ENCODE measurements at regions of chr16 and their contacts with region 1.

Region 1: GRCh38 chr16:18959031-18959505 is 24.7 kb upstream of the TMC7 start:
- DNase-seq: peak; percentile 17 to 37
- ATAC-seq: peak; percentile 50 to 56
- H3K4me3 ChIP-seq: no peak overlapping the region
- H3K27ac ChIP-seq: peak overlapping the region; percentile 87 to 97 (median 96)
- H3K4me1 ChIP-seq: peaks cover 27 to 34% of the 10 kb centered on the region in 2 donors
- H3K27me3 ChIP-seq: no peaks in the 10 kb centered on the region
- CTCF ChIP-seq: no peak
- POLR2A ChIP-seq: no peak

Region 2: DNA sequence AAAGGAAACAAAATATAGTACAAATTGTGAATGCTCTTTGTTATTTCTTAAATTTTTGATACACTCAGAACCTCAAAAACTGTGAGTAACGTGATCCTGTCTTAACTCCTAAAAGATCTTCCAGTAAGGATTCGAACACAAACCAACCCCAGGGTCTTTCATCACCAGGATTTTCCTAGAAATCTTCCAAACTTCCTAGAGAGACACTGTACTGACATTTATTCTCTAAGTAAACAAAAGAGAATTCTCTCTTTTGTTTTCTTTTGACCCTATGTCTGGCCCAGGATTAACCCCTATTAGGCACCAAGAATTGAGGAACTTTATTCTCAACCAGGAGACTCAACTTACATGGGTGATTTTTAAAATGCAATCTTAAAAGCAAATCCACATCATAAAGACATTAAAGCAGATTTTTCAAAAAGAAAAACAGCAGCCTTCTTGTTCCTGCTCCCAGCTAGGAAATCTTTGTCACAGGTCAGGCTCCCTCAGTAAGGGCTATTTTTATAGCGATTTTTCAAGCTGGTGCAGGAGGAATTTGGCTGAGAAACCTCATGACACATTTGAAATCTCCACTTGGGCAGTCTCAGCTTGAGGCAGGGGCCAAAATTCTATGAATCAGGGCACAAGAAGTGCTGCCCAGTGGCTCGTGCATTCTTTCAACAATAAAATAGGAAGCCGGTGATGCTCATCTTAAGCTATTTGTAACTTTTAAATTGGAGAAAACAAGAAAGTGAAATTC is 26.7 kb before region 1 on chr16:
- in situ Hi-C with region 1: no loop called
- intact Hi-C with region 1: loop called (anchors 1 kb)
- DNase-seq: peak; percentile 75 to 76
- ATAC-seq: peak; percentile 75 to 80
- H3K4me3 ChIP-seq: peak overlapping the region; percentile 1 to 22 (median 11)
- H3K27ac ChIP-seq: peak overlapping the region; percentile 90 to 95 (median 91)
- H3K4me1 ChIP-seq: peaks cover 24 to 30% of the 10 kb centered on the region in 2 donors
- H3K27me3 ChIP-seq: no peaks in the 10 kb centered on the region
- CTCF ChIP-seq: no peak
- POLR2A ChIP-seq: peak in 1 of 2 donors; percentile 38

Measured in gastrocnemius medialis (tissue), 4 donors.